ENCODE measurements at regions of chr12 and their contacts with region 1.

Region 1: GRCh38 chr12:109093022-109093918 is at the start of gene ALKBH2:
- DNase-seq: peak; percentile 85 to 98 (median 95)

Region 2: DNA sequence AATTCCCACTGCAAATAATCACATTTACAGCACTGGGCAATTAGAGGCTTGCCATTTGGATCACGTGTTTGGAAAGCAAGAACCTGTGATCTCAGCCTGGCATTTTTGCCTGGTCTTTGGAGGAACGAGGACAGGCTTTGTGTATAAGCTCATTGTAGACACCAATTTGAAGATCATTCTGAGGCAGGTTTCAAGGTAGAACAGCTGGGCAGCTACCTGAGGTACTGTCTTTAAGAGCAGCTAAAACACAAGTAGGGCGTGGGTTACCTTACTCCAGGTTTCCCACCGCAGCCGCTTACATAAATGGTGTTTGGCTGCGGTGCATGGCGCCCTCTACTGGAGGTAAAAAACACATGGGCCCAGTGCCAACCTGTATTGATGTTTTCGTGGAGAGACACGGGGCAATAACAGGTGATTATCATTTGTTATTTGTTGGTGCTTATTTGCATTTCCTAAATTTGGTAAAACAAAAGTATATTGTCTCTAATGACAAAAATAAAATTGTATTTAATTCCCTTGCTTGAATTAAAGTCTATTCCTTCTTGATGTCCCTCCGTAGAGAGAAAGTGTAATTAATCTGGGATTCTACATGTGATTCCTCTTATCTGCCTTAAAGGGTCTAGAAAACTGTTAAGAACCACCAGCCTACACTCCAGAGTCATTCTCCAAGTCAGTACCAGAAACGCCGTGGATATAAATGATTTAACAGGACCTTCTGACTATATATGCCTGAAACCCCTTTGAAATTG is 142.1 kb before region 1 on chr12:
- intact Hi-C with region 1: loop called (anchors 10 kb)
- DNase-seq: peak; percentile 47 to 90 (median 76)

Region 3: DNA sequence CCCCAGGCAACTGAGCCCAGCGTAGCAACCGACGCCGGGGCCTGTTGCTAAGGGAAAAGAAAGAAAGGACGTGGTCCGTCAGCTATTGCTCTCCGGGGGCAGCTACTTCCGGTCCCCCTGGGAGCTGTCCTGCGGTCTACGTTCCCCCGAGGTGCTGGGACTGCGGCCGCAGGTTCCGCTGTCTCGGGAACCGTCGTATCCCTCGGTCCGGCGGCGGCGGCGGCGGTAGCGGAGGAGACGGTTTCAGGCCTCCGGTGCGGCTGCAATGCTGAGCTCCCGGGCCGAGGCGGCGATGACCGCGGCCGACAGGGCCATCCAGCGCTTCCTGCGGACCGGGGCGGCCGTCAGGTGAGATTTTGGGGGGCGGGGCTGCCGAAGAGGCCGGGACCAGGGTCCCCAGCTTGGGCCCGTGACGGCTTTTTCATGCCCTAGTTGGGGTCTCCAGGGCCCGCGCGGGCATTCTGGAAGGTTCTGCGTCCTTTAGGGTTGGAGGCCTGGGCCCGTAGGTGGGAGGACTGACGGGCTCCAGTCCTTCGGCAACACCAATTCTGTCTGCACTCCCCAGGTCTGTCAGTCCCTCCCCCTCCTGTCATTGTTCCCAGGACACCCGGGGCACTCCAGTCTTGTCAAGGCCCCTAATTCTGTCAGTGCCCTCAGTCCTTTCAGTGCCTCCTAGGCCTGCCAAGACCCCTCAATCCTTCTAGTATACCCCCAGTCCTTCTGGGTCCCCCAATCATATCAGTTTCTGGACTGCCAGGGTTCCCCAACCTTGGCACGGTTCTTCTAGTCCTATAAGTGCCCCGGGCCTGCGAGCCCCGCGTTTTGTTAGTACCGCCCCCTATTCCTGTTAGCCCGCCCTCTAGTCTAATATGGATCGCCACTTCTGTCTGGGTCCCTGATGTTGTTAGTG is 40.6 kb before region 1 on chr12 and contains the start of gene USP30:
- intact Hi-C with region 1: loop called (anchors 5 kb)
- DNase-seq: peak; percentile 79 to 96 (median 90)